Thyroid gland (tissue), 4 donors: ENCODE measurements at regions of chr11 and their contacts with region 1.

Region 1: DNA sequence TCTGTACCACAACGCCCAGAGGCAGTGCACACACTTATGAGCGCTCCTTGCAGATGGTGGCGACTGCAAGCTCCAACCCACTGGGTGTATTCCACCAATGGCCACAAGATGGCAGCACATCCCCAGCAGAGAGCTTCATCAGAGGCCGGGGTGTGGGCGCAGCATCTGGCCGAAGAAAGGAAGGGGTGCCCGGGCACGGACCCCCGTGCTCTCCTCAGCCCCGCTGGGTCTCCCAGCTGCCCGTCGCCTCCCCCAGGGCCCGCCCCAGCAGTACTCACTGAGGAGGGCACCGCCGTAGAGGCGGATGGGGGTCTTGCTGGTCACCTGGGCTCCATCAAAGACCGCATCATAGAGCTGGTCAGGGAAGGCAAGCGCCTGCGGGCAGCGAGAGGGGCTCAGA is 14.2 kb downstream of the TP53I11 start:
- DNase-seq: peak; percentile 80 to 83
- H3K4me3 ChIP-seq: no peak overlapping the region
- H3K27ac ChIP-seq: no peak overlapping the region
- H3K4me1 ChIP-seq: peaks cover 0 to 22% of the 10 kb centered on the region in 2 donors
- H3K27me3 ChIP-seq: no peaks in the 10 kb centered on the region
- CTCF ChIP-seq: peak; percentile 89 to 95 (median 92)
- POLR2A ChIP-seq: no peak

Region 2: DNA sequence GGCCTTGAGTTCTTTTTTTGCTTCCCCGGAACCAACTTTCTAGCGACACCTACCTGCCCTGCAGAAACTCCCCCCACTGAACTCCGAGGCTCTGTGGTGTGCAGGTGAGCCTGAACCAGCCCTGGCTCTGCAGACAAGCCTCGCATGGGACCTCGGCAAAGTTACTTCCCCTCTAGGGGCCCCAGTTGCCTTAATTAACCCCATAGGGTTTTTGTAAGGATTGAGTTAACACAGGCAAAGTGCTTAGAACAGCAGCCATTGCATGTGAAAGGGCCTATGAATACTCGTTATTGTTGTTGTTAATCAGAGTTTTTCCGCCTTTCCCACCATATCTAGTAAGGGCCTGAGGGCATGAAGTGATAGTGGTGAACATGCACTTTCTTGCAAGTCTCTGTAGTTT is 362.2 kb after region 1 on chr11:
- intact Hi-C with region 1: loop called (anchors 10 kb)
- DNase-seq: no peak
- H3K4me3 ChIP-seq: no peak overlapping the region
- H3K27ac ChIP-seq: no peak overlapping the region
- H3K4me1 ChIP-seq: no peaks in the 10 kb centered on the region
- H3K27me3 ChIP-seq: no peaks in the 10 kb centered on the region
- CTCF ChIP-seq: no peak
- POLR2A ChIP-seq: no peak